ENCODE measurements at regions of chr5 and their contacts with region 1.

Region 1: GRCh38 chr5:76715736-76716455 is at the start of gene F2R:
- DNase-seq: peak in 8 of 9 donors; percentile 17 to 56 (median 21)
- ATAC-seq: peak; percentile 90
- H3K4me3 ChIP-seq: peak within 1 kb of the TSS; percentile 82
- H3K4me3 Mint-ChIP-seq: peak within 1 kb of the TSS; percentile 48 to 88 (median 82)
- H3K27ac ChIP-seq: no peak within 1 kb of the TSS
- H3K27ac Mint-ChIP-seq: peak within 1 kb of the TSS in 3 of 9 donors; percentile 11 to 79 (median 71)
- H3K4me1 ChIP-seq: peaks cover 16 to 17% of the 10 kb centered on the region in 2 donors
- H3K4me1 Mint-ChIP-seq: peaks cover 11 to 36% (median 27%) of the 10 kb centered on the region in 7 donors
- H3K27me3 ChIP-seq: peaks cover 0 to 17% of the 10 kb centered on the region in 2 donors
- H3K27me3 Mint-ChIP-seq: peaks cover 35 to 42% (median 40%) of the 10 kb centered on the region in 5 donors
- total RNA-seq, gene F2R: 0.65 to 8.2 (median 1.2) TPM

Region 2: GRCh38 chr5:76736679-76737556 is 21.0 kb after region 1 on chr5:
- CTCF ChIA-PET with region 1: no interaction called
- POLR2A ChIA-PET with region 1: no interaction called
- intact Hi-C with region 1: loop called (anchors 1 kb)
- DNase-seq: no peak
- ATAC-seq: no peak
- H3K4me3 ChIP-seq: no peak overlapping the region
- H3K4me3 Mint-ChIP-seq: peak overlapping the region in 2 of 10 donors; percentile 51 to 69
- H3K27ac ChIP-seq: no peak overlapping the region
- H3K27ac Mint-ChIP-seq: peak overlapping the region in 2 of 9 donors; percentile 71 to 79
- H3K4me1 ChIP-seq: peaks cover 5 to 70% of the 10 kb centered on the region in 2 donors
- H3K4me1 Mint-ChIP-seq: peaks cover 8 to 49% (median 11%) of the 10 kb centered on the region in 7 donors
- H3K27me3 ChIP-seq: no peaks in the 10 kb centered on the region
- H3K27me3 Mint-ChIP-seq: peaks cover 3 to 11% (median 5%) of the 10 kb centered on the region in 5 donors

Region 3: DNA sequence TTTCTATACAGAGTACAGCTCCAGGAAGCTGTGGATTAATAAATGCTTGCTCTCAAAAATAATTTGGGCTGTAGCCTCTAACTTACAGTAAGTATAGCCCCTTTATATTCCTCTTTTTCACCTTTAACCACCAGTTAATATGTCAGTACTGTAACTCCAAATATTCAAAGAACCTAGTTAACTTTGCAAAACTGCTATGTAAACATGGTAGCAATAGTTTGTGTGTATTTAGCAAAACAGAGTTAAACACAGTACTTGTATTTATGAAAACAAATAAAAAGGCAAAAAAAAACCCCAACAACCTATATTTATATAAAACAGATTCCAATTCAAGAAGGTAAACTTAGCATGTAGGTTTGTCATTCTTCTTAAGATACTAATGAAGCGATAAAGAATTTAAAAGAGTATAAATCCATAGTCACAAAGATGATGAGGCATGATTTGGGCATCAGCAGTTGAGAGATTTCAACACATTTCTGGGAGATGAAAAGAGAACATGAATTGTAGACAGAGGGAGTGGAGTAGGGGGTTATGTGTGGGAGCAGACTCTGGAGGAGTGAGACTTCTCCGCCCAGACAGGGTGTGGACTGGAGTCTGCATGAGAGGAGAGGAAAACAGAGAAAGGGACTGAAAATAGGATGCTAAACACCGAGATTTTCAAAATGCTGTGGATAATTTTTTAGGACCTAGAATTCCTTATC is 56.0 kb after region 1 on chr5:
- CTCF ChIA-PET with region 1: interaction called, 4 read pairs
- POLR2A ChIA-PET with region 1: no interaction called
- intact Hi-C with region 1: loop called (anchors 1 kb)
- DNase-seq: no peak
- ATAC-seq: no peak
- H3K4me3 ChIP-seq: no peak overlapping the region
- H3K4me3 Mint-ChIP-seq: no peak overlapping the region
- H3K27ac ChIP-seq: no peak overlapping the region
- H3K27ac Mint-ChIP-seq: peak overlapping the region in 2 of 9 donors; percentile 6 to 32
- H3K4me1 ChIP-seq: no peaks in the 10 kb centered on the region
- H3K4me1 Mint-ChIP-seq: peaks cover 0 to 7% (median 3%) of the 10 kb centered on the region in 7 donors
- H3K27me3 ChIP-seq: no peaks in the 10 kb centered on the region
- H3K27me3 Mint-ChIP-seq: peaks cover 0 to 4% (median 0%) of the 10 kb centered on the region in 5 donors

Region 4: GRCh38 chr5:76855961-76856360 is 140.1 kb after region 1 on chr5:
- CTCF ChIA-PET with region 1: no interaction called
- POLR2A ChIA-PET with region 1: no interaction called
- intact Hi-C with region 1: loop called in 1 of 2 experiments (anchors 10 kb)
- DNase-seq: peak in 7 of 9 donors; percentile 23 to 60 (median 43)
- ATAC-seq: peak; percentile 88
- H3K4me3 ChIP-seq: no peak overlapping the region
- H3K4me3 Mint-ChIP-seq: peak overlapping the region; percentile 35 to 77 (median 70)
- H3K27ac ChIP-seq: peak overlapping the region; percentile 27
- H3K27ac Mint-ChIP-seq: peak overlapping the region; percentile 49 to 95 (median 84)
- H3K4me1 ChIP-seq: peaks cover 21 to 27% of the 10 kb centered on the region in 2 donors
- H3K4me1 Mint-ChIP-seq: peaks cover 27 to 49% (median 45%) of the 10 kb centered on the region in 7 donors
- H3K27me3 ChIP-seq: no peaks in the 10 kb centered on the region
- H3K27me3 Mint-ChIP-seq: no peaks in the 10 kb centered on the region